ENCODE measurements at regions of chr2 and their contacts with region 1.

Region 1: DNA sequence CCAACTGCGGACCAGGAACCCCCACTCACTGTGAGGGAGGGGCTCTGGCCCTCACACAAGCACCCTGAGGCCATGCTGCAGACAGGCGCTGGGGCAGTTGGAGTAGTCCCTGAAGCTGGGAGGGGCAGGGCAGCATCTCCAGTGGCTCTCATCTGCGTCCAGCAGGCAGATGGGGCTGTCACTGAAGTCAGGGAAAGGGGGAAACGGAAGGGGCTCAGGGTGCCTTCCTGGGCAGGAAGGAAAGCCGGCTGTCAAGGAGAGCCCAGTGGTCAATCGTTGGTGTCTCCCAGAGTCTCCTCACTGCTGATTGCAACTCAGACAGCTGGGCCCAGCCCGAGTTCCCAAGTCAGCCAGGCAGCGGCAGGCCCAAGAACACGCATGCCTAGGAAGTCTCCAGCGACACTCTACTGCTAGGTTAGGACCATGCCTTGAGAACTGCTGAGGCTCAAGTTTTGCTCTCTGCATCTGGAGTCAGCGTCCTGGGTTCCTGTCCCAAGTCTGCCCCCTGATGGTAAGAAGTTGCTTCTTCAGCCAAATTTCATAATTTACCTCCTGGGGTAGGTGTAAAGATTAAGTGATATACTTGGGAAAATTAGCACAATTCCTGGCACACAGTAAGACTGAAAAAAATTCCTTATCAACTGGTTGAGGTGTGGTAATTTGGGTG is 27.5 kb upstream of the NMUR1 start:
- DNase-seq: no peak
- H3K4me3 ChIP-seq: no peak overlapping the region
- H3K27ac ChIP-seq: peak overlapping the region; percentile 45
- H3K4me1 ChIP-seq: peaks cover 15% of the 10 kb centered on the region
- H3K27me3 ChIP-seq: no peaks in the 10 kb centered on the region
- CTCF ChIP-seq: peak in 2 of 3 experiments; percentile 28 to 44
- POLR2A ChIP-seq: no peak

Region 2: DNA sequence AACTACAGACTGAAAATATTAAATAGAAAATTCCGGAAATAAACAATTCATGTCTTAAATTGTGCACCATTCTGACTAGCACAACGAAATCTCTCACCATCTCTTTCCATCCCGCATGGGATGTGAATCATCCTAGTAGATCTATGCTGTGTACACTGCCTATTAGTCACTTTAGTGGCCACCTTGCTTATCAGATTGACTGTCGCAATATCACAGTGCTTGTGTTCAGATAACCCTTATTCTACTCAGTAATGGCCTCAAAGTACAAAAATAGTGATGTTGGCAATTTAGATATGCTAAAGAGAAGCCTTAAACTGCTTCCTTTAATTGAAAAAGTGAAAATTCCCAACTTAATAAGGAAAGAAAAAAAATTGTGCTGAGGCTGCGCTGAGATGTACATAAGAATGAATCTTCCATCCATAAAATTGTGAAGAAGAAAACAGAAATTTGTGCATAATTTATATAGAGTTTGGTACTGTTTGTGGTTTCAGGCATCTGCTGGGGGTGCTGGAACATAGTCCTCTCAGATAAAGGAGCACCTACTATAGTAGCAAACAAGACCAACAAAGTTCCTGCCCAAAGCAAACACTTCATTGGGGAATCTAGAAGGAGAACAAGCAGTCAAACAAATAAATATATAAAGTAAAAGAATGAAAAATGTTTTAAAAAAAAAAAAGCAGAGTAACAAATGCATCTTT is 489.0 kb before region 1 on chr2:
- intact Hi-C with region 1: no loop called
- DNase-seq: no peak
- H3K4me3 ChIP-seq: no peak overlapping the region
- H3K27ac ChIP-seq: no peak overlapping the region
- H3K4me1 ChIP-seq: no peaks in the 10 kb centered on the region
- H3K27me3 ChIP-seq: no peaks in the 10 kb centered on the region
- CTCF ChIP-seq: no peak
- POLR2A ChIP-seq: no peak

Region 3: GRCh38 chr2:231503766-231504165 is 53.9 kb before region 1 on chr2:
- intact Hi-C with region 1: no loop called
- DNase-seq: no peak
- H3K4me3 ChIP-seq: no peak overlapping the region
- H3K27ac ChIP-seq: no peak overlapping the region
- H3K4me1 ChIP-seq: no peaks in the 10 kb centered on the region
- H3K27me3 ChIP-seq: no peaks in the 10 kb centered on the region
- CTCF ChIP-seq: no peak
- POLR2A ChIP-seq: no peak

Region 4: DNA sequence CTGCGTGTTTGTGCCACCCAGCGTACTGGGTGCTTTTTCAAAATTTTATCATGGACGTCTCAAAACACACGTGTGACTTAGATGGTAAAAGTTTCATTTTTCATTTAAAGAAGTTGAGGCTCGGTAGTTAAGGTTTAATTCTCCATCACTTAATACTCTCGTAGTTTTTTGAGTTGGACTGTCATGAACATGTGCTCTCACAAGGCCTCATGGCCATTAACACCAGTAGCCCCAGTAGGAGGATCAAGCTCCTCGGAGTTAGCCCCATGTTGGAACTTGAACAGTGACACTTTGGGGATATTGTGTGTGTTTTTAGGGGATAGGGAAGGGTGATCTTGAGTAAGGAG is 42.8 kb before region 1 on chr2:
- intact Hi-C with region 1: loop called (anchors 5 kb)
- DNase-seq: no peak
- H3K4me3 ChIP-seq: peak overlapping the region; percentile 56 to 66
- H3K27ac ChIP-seq: peak overlapping the region; percentile 72
- H3K4me1 ChIP-seq: peaks cover 6% of the 10 kb centered on the region
- H3K27me3 ChIP-seq: no peaks in the 10 kb centered on the region
- CTCF ChIP-seq: no peak
- POLR2A ChIP-seq: no peak

Region 5: GRCh38 chr2:231528099-231529015 is 29.3 kb before region 1 on chr2:
- intact Hi-C with region 1: loop called (anchors 2 kb)
- DNase-seq: no peak
- H3K4me3 ChIP-seq: no peak overlapping the region
- H3K27ac ChIP-seq: no peak overlapping the region
- H3K4me1 ChIP-seq: peaks cover 7% of the 10 kb centered on the region
- H3K27me3 ChIP-seq: peaks cover 7% of the 10 kb centered on the region
- CTCF ChIP-seq: no peak
- POLR2A ChIP-seq: no peak